ENCODE measurements at regions of chr6 and their contacts with region 1.

Region 1: GRCh38 chr6:45421709-45422502 is 44.2 kb upstream of the SUPT3H start:
- DNase-seq: peak; percentile 8 to 76 (median 56)
- ATAC-seq: peak; percentile 35
- H3K4me3 ChIP-seq: peak overlapping the region; percentile 64 to 76
- H3K4me3 Mint-ChIP-seq: peak overlapping the region; percentile 94
- H3K27ac ChIP-seq: peak overlapping the region in 1 of 2 experiments; percentile 62
- H3K27ac Mint-ChIP-seq: peak overlapping the region; percentile 92
- H3K4me1 ChIP-seq: peaks cover 21% of the 10 kb centered on the region
- H3K4me1 Mint-ChIP-seq: peaks cover 45% of the 10 kb centered on the region
- H3K27me3 ChIP-seq: peaks cover 0 to 13% of the 10 kb centered on the region in 2 experiments
- H3K27me3 Mint-ChIP-seq: peaks cover 2% of the 10 kb centered on the region
- CTCF ChIP-seq: no peak

Region 2: GRCh38 chr6:44475779-44476434 is 946.0 kb before region 1 on chr6:
- CTCF ChIA-PET with region 1: no interaction called
- POLR2A ChIA-PET with region 1: no interaction called
- intact Hi-C with region 1: loop called in 1 of 2 experiments (anchors 5 kb)
- DNase-seq: peak; percentile 26 to 80 (median 60)
- ATAC-seq: peak; percentile 74
- H3K4me3 ChIP-seq: no peak overlapping the region
- H3K4me3 Mint-ChIP-seq: no peak overlapping the region
- H3K27ac ChIP-seq: no peak overlapping the region
- H3K27ac Mint-ChIP-seq: no peak overlapping the region
- H3K4me1 ChIP-seq: peaks cover 9% of the 10 kb centered on the region
- H3K4me1 Mint-ChIP-seq: peaks cover 2% of the 10 kb centered on the region
- H3K27me3 ChIP-seq: no peaks in the 10 kb centered on the region
- H3K27me3 Mint-ChIP-seq: no peaks in the 10 kb centered on the region
- CTCF ChIP-seq: peak; percentile 70

Region 3: GRCh38 chr6:44655412-44656342 is 766.2 kb before region 1 on chr6:
- CTCF ChIA-PET with region 1: interaction called, 41 read pairs
- POLR2A ChIA-PET with region 1: interaction called, 3 read pairs
- intact Hi-C with region 1: loop called (anchors 1 kb)
- DNase-seq: peak; percentile 53 to 88 (median 77)
- ATAC-seq: peak; percentile 78
- H3K4me3 ChIP-seq: no peak overlapping the region
- H3K4me3 Mint-ChIP-seq: peak overlapping the region; percentile 20
- H3K27ac ChIP-seq: no peak overlapping the region
- H3K27ac Mint-ChIP-seq: peak overlapping the region; percentile 14
- H3K4me1 ChIP-seq: peaks cover 10% of the 10 kb centered on the region
- H3K4me1 Mint-ChIP-seq: peaks cover 7% of the 10 kb centered on the region
- H3K27me3 ChIP-seq: no peaks in the 10 kb centered on the region
- H3K27me3 Mint-ChIP-seq: peaks cover 5% of the 10 kb centered on the region
- CTCF ChIP-seq: peak; percentile 93

Region 4: GRCh38 chr6:44932651-44933091 is 489.2 kb before region 1 on chr6:
- CTCF ChIA-PET with region 1: interaction called, 3 read pairs
- POLR2A ChIA-PET with region 1: interaction called, 3 read pairs
- intact Hi-C with region 1: loop called (anchors 5 kb)
- DNase-seq: peak; percentile 28 to 87 (median 63)
- ATAC-seq: peak; percentile 79
- H3K4me3 ChIP-seq: peak overlapping the region; percentile 33 to 53
- H3K4me3 Mint-ChIP-seq: peak overlapping the region; percentile 87
- H3K27ac ChIP-seq: peak overlapping the region; percentile 74 to 81
- H3K27ac Mint-ChIP-seq: peak overlapping the region; percentile 98
- H3K4me1 ChIP-seq: peaks cover 45% of the 10 kb centered on the region
- H3K4me1 Mint-ChIP-seq: peaks cover 59% of the 10 kb centered on the region
- H3K27me3 ChIP-seq: no peaks in the 10 kb centered on the region
- H3K27me3 Mint-ChIP-seq: no peaks in the 10 kb centered on the region
- CTCF ChIP-seq: no peak

Region 5: GRCh38 chr6:45327956-45328522 is 93.9 kb before region 1 on chr6 and contains the start of gene RUNX2:
- CTCF ChIA-PET with region 1: interaction called, 3 read pairs
- POLR2A ChIA-PET with region 1: no interaction called
- intact Hi-C with region 1: loop called (anchors 5 kb)
- DNase-seq: peak in 3 of 9 experiments; percentile 20 to 68 (median 33)
- ATAC-seq: peak; percentile 80
- H3K4me3 ChIP-seq: peak within 1 kb of the TSS; percentile 44 to 57
- H3K4me3 Mint-ChIP-seq: peak within 1 kb of the TSS; percentile 94
- H3K27ac ChIP-seq: peak within 1 kb of the TSS; percentile 51 to 57
- H3K27ac Mint-ChIP-seq: peak within 1 kb of the TSS; percentile 94
- H3K4me1 ChIP-seq: peaks cover 49% of the 10 kb centered on the region
- H3K4me1 Mint-ChIP-seq: peaks cover 85% of the 10 kb centered on the region
- H3K27me3 ChIP-seq: no peaks in the 10 kb centered on the region
- H3K27me3 Mint-ChIP-seq: no peaks in the 10 kb centered on the region
- CTCF ChIP-seq: no peak
- total RNA-seq, gene RUNX2: 11.7 to 13.8 TPM

Region 6: DNA sequence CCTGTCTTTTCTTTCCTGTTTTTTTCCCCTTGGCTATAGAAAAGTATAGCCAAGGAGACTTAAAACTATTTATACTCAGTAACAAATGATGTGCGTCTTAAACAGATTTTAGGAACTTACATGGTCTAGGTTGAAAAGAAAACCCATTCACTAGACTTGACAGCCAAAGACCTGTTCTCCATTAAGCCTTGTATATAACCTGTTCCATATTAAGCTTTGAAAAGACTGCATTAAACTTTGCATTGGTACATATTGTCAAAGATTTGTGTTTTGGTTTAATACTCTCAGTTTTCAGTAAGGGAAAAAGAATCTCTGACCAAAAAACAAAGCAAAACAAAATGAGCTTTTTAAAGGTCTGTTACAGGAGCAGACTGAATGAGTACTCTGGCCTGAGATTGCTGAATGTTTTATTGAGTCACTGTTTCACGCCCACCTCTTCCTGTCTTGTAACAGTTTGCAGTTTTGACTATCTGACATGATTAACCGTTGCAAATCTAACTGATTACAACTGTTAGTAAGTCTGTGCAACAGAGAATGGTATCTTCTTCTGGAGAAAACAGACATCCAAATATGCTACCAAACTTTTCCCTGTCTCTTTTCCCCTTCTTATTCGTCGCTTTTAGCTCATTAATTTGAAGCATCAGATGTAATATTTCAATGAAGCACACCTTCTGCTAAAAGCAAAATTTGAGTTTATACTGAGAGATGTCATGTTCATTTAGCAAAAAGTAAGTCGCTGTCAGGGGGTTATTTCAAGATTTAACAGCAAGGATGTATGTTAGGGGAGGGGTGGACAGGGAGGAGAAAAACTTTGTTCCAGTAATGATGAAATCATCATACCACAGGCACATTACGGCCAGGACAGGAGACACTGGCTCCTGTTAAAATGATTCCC is 14.9 kb after region 1 on chr6:
- CTCF ChIA-PET with region 1: no interaction called
- POLR2A ChIA-PET with region 1: interaction called, 6 read pairs
- intact Hi-C with region 1: loop called (anchors 2 kb)
- DNase-seq: peak in 3 of 9 experiments; percentile 9 to 44 (median 34)
- ATAC-seq: peak; percentile 69
- H3K4me3 ChIP-seq: no peak overlapping the region
- H3K4me3 Mint-ChIP-seq: peak overlapping the region; percentile 38
- H3K27ac ChIP-seq: no peak overlapping the region
- H3K27ac Mint-ChIP-seq: peak overlapping the region; percentile 60
- H3K4me1 ChIP-seq: peaks cover 49% of the 10 kb centered on the region
- H3K4me1 Mint-ChIP-seq: peaks cover 66% of the 10 kb centered on the region
- H3K27me3 ChIP-seq: no peaks in the 10 kb centered on the region
- H3K27me3 Mint-ChIP-seq: no peaks in the 10 kb centered on the region
- CTCF ChIP-seq: no peak

Region 7: GRCh38 chr6:45586216-45587171 is 164.6 kb after region 1 on chr6:
- CTCF ChIA-PET with region 1: no interaction called
- POLR2A ChIA-PET with region 1: interaction called, 7 read pairs
- intact Hi-C with region 1: loop called (anchors 2 kb)
- DNase-seq: peak; percentile 22 to 90 (median 68)
- ATAC-seq: peak; percentile 82
- H3K4me3 ChIP-seq: peak overlapping the region; percentile 6 to 13
- H3K4me3 Mint-ChIP-seq: peak overlapping the region; percentile 83
- H3K27ac ChIP-seq: peak overlapping the region in 1 of 2 experiments; percentile 6
- H3K27ac Mint-ChIP-seq: peak overlapping the region; percentile 92
- H3K4me1 ChIP-seq: peaks cover 56% of the 10 kb centered on the region
- H3K4me1 Mint-ChIP-seq: peaks cover 63% of the 10 kb centered on the region
- H3K27me3 ChIP-seq: no peaks in the 10 kb centered on the region
- H3K27me3 Mint-ChIP-seq: no peaks in the 10 kb centered on the region
- CTCF ChIP-seq: no peak

Region 8: GRCh38 chr6:45880159-45880558 is 458.3 kb after region 1 on chr6:
- CTCF ChIA-PET with region 1: no interaction called
- POLR2A ChIA-PET with region 1: no interaction called
- intact Hi-C with region 1: no loop called
- DNase-seq: no peak
- ATAC-seq: no peak
- H3K4me3 ChIP-seq: no peak overlapping the region
- H3K4me3 Mint-ChIP-seq: no peak overlapping the region
- H3K27ac ChIP-seq: no peak overlapping the region
- H3K27ac Mint-ChIP-seq: no peak overlapping the region
- H3K4me1 ChIP-seq: no peaks in the 10 kb centered on the region
- H3K4me1 Mint-ChIP-seq: no peaks in the 10 kb centered on the region
- H3K27me3 ChIP-seq: no peaks in the 10 kb centered on the region
- H3K27me3 Mint-ChIP-seq: no peaks in the 10 kb centered on the region
- CTCF ChIP-seq: no peak

Measured in CD8-positive, alpha-beta T cell (primary cell).